SK-N-SH (cell line): ENCODE measurements at regions of chr14 and their contacts with region 1.

Region 1: DNA sequence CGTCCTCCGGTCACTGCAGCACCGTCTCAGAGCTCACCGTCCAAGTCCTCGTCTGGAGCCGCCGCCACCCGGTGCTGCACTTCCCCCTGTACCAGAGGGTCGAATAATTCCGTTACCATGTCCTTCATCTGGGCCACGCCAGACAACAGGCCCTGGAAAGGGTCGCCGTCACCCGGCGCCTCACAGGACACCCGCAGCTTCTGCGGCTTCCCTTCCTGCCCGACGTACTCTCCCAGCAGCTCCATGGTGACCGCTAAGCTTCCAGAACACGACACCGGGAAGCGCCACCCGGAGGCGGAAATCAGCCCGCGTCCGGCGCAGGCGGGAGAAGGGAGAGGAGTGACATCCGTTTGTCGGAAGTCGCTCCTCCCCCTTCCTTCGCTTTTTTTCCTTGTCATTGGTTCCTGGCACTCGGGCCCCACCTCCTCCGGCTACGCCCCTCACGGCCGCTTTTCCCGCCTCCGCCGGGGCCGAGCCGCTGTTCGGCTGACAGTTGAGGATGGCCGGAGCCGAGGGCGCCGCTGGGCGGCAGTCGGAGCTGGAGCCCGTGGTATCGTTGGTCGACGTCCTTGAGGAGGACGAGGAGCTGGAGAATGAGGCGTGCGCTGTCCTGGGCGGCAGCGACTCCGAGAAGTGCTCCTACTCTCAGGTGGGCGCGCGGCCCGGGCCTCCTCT is at the starts of genes GON7 and UBR7:
- DNase-seq: peak; percentile 96
- H3K4me3 ChIP-seq: peak within 1 kb of the TSS; percentile 75 to 97
- H3K27ac ChIP-seq: peak within 1 kb of the TSS; percentile 82 to 83
- H3K4me1 ChIP-seq: peaks cover 6% of the 10 kb centered on the region in 2 experiments; a peak in 3 of 4 replicates
- H3K27me3 ChIP-seq: no peaks in the 10 kb centered on the region
- CTCF ChIP-seq: no peak
- EP300 ChIP-seq: no peak
- RAD21 ChIP-seq: no peak
- polyA plus RNA-seq, gene GON7: 14.8 and 16.5 TPM in 2 replicates
- polyA plus RNA-seq, gene UBR7: 28.2 and 29.7 TPM in 2 replicates

Region 2: GRCh38 chr14:93184388-93185353 is 22.3 kb before region 1 on chr14 and contains the starts of genes LYSET and MOAP1:
- CTCF ChIA-PET with region 1: interaction called, 11 read pairs
- POLR2A ChIA-PET with region 1: interaction called, 19 read pairs
- DNase-seq: peak; percentile 98
- H3K4me3 ChIP-seq: peak within 1 kb of the TSS; percentile 94 to 99
- H3K27ac ChIP-seq: peak within 1 kb of the TSS; percentile 92 to 94
- H3K4me1 ChIP-seq: peaks cover 2 to 17% of the 10 kb centered on the region in 2 experiments; a peak in 2 of 4 replicates
- H3K27me3 ChIP-seq: no peaks in the 10 kb centered on the region
- CTCF ChIP-seq: peak; percentile 31
- EP300 ChIP-seq: no peak
- RAD21 ChIP-seq: no peak
- polyA plus RNA-seq, gene LYSET: 17.7 and 18.5 TPM in 2 replicates
- polyA plus RNA-seq, gene MOAP1: 25.0 and 42.0 TPM in 2 replicates

Region 3: GRCh38 chr14:93219103-93219726 is 12.3 kb after region 1 on chr14:
- CTCF ChIA-PET with region 1: interaction called, 11 read pairs
- POLR2A ChIA-PET with region 1: no interaction called
- DNase-seq: peak; percentile 55
- H3K4me3 ChIP-seq: no peak overlapping the region
- H3K27ac ChIP-seq: no peak overlapping the region
- H3K4me1 ChIP-seq: no peaks in the 10 kb centered on the region
- H3K27me3 ChIP-seq: no peaks in the 10 kb centered on the region
- CTCF ChIP-seq: peak; percentile 74
- EP300 ChIP-seq: no peak
- RAD21 ChIP-seq: peak; percentile 76

Region 4: DNA sequence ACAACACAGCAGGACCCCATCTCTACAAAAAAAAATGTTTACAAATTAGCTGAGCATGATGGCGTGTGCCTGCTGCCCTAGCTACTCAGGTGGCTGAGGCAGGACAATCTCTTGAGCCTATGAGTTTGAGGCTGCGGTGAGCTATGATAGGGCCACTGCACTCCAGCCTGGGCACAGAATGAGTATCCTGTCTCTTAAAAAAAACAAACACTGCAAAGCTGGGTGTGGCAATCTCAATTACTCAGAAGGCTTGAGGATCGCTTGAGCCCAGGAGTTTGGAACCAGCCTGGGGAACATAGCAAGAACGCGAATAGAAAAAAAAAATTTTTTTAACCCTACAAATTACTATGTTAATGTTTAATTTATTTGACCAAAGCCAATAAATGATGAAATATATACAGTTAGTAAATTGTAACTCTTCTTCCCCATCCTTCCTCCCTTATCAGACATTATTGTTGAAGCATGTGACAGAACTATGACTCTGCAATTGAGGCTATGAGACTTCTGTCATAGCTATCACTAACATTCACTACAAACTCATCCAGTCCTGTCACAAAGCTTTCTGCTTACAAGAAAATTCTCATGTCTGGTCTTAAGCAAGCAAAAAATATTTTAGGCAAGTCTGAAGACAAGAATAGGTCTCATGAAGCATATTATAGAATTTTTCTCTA is 116.1 kb after region 1 on chr14:
- CTCF ChIA-PET with region 1: no interaction called
- POLR2A ChIA-PET with region 1: no interaction called
- DNase-seq: no peak
- H3K4me3 ChIP-seq: no peak overlapping the region
- H3K27ac ChIP-seq: no peak overlapping the region
- H3K4me1 ChIP-seq: peaks cover 0 to 22% of the 10 kb centered on the region in 2 experiments; a peak in 2 of 4 replicates
- H3K27me3 ChIP-seq: no peaks in the 10 kb centered on the region
- CTCF ChIP-seq: no peak
- EP300 ChIP-seq: no peak
- RAD21 ChIP-seq: no peak

Region 5: DNA sequence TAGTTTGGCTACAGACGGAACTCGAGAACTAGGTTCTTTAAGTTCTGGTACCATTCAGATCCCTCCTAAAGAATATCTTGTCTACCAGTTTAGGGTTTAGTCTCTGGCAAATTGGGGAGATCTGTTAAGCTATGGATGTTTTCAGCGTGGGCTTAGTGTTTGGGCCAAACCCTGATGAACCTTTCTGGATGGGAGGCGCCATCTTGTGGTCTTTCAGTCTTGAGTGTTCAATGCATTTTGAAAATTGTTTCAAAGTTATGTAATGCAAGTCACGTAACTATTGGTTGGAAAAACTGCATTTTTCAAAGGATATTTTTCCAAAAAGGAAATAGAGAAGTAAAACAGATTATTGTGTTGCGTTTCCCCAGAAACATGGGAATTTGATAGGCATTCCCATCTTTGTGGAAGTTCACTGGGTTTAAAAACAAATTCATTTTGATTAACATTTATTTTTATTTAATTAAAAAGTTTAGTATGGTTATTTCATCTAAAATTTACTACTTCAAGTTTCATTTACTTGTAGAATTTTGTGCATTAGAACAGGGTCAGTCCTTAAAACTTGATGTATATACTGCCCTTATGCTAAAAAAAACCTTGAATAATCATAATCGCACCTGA is 412.4 kb after region 1 on chr14:
- CTCF ChIA-PET with region 1: interaction called, 25 read pairs
- POLR2A ChIA-PET with region 1: no interaction called
- DNase-seq: peak; percentile 47
- H3K4me3 ChIP-seq: peak overlapping the region in 1 of 2 experiments; percentile 11; a peak in 1 of 4 replicates
- H3K27ac ChIP-seq: no peak overlapping the region
- H3K4me1 ChIP-seq: no peaks in the 10 kb centered on the region
- H3K27me3 ChIP-seq: no peaks in the 10 kb centered on the region
- CTCF ChIP-seq: peak; percentile 56
- EP300 ChIP-seq: no peak
- RAD21 ChIP-seq: peak; percentile 78